ENCODE measurements at regions of chr19 and their contacts with region 1.

Region 1: GRCh38 chr19:38647368-38647965 is at the start of gene ACTN4:
- DNase-seq: peak; percentile 87
- H3K4me3 ChIP-seq: peak within 1 kb of the TSS; percentile 89
- H3K27ac ChIP-seq: peak within 1 kb of the TSS; percentile 47
- H3K27me3 ChIP-seq: no peaks in the 10 kb centered on the region
- CTCF ChIP-seq: no peak
- polyA plus RNA-seq, gene ACTN4: 300 and 359 TPM in 2 replicates

Region 2: GRCh38 chr19:38618590-38619360 is 28.7 kb before region 1 on chr19 and contains the start of gene EIF3K:
- CTCF ChIA-PET with region 1: interaction called, 6 read pairs
- POLR2A ChIA-PET with region 1: interaction called, 11 read pairs
- DNase-seq: peak; percentile 98
- H3K4me3 ChIP-seq: peak within 1 kb of the TSS; percentile 97
- H3K27ac ChIP-seq: peak within 1 kb of the TSS; percentile 43
- H3K27me3 ChIP-seq: no peaks in the 10 kb centered on the region
- CTCF ChIP-seq: no peak
- polyA plus RNA-seq, gene EIF3K: 168 and 250 TPM in 2 replicates

Region 3: DNA sequence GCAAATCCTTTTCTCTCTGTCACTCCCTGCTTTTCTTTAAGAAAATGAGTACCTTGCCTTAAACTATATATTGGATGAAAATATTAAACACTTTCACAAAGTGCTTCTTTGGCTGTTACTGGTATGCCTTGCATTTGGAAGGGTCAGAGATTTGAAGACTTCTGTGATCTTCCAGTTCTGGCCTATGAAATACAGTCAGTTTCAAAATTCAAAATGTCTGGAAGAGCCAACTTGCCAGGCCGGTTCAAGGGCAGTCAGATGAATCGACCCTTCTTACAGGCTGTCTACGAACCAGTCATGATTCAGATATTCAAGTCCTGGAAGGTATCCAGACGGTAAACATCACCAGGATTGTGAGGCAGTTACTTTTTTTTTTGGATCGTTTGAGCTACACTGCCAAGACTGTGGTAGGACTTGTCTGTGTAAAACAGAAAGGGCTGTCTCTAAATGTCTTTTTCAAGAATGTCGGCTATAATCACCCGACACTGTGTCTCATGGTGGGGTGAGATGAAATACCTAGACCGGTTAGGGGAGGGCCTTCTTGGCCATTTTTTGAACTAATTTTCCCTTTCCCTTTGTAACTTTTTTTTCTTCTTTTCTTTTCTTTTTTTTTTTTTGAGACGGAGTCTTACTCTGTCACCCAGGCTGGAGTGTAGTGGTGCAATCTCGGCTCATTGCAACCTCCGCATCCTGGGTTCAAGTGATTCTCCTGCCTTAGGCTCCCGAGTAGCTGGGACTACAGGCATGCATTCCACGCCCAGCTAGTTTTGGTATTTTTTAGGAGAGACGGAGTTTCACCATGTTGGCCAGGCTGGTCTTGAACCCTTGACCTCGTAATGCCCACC is 11.2 kb after region 1 on chr19:
- CTCF ChIA-PET with region 1: no interaction called
- POLR2A ChIA-PET with region 1: interaction called, 15 read pairs
- DNase-seq: peak; percentile 98
- H3K4me3 ChIP-seq: peak overlapping the region; percentile 42
- H3K27ac ChIP-seq: peak overlapping the region; percentile 95
- H3K27me3 ChIP-seq: no peaks in the 10 kb centered on the region
- CTCF ChIP-seq: no peak

Region 4: GRCh38 chr19:38693380-38694223 is 46.1 kb after region 1 on chr19:
- CTCF ChIA-PET with region 1: no interaction called
- POLR2A ChIA-PET with region 1: interaction called, 12 read pairs
- DNase-seq: no peak
- H3K4me3 ChIP-seq: no peak overlapping the region
- H3K27ac ChIP-seq: peak overlapping the region; percentile 94
- H3K27me3 ChIP-seq: no peaks in the 10 kb centered on the region
- CTCF ChIP-seq: no peak

Region 5: DNA sequence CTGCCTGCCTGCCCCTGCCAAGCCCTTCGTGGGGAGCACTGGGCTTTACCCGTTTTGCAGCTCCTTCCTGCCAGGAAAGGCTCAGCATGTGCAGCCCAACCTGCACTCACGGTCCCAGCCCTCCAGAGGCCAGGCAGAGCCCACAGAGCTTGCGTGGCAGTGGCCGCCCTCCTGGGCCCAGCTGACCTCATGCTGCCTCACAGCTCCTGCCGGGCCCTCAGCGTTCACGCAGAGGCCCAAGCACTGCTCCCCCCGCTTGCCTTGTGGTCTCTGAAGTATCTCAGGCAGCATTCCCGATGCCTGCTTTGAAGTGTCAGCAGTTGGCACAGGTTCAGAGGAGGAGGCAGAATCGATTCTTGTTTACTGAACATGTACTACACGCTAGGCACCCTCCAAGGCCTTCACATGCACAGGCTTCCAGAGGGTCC is 64.3 kb after region 1 on chr19:
- CTCF ChIA-PET with region 1: interaction called, 3 read pairs
- POLR2A ChIA-PET with region 1: interaction called, 25 read pairs
- DNase-seq: peak; percentile 86
- H3K4me3 ChIP-seq: no peak overlapping the region
- H3K27ac ChIP-seq: peak overlapping the region; percentile 83
- H3K27me3 ChIP-seq: no peaks in the 10 kb centered on the region
- CTCF ChIP-seq: peak; percentile 30